K562 (cell line): ENCODE measurements at regions of chr3 and their contacts with region 1.

Region 1: GRCh38 chr3:12810013-12810780 is 13.7 kb downstream of the CAND2 start:
- DNase-seq: peak; percentile 98 to 100 (median 100)
- ATAC-seq: peak; percentile 99
- H3K4me3 ChIP-seq: peak overlapping the region; percentile 59
- H3K27ac ChIP-seq: peak overlapping the region; percentile 13; the same call in 2 of the 3 replicates
- H3K4me1 ChIP-seq: peaks cover 9 to 20% of the 10 kb centered on the region in 2 experiments; a peak in 4 of 5 replicates
- H3K27me3 ChIP-seq: no peaks in the 10 kb centered on the region
- CTCF ChIP-seq: peak; percentile 78 to 93 (median 93)
- EP300 ChIP-seq: no peak
- POLR2A ChIP-seq: peak; percentile 64; the same call in 1 of the 2 replicates
- RAD21 ChIP-seq: peak; percentile 61 to 70

Region 2: GRCh38 chr3:12796171-12797123 is 13.8 kb before region 1 on chr3 and contains the start of gene CAND2:
- CTCF ChIA-PET with region 1: no interaction called
- POLR2A ChIA-PET with region 1: interaction called, 65 read pairs
- in situ Hi-C with region 1: no loop called
- intact Hi-C with region 1: no loop called
- DNase-seq: peak; percentile 78 to 87 (median 84)
- ATAC-seq: peak; percentile 96
- H3K4me3 ChIP-seq: peak within 1 kb of the TSS; percentile 73
- H3K27ac ChIP-seq: peak within 1 kb of the TSS; percentile 77
- H3K4me1 ChIP-seq: peaks cover 8 to 25% of the 10 kb centered on the region in 2 experiments; a peak in 3 of 5 replicates
- H3K27me3 ChIP-seq: no peaks in the 10 kb centered on the region
- CTCF ChIP-seq: no peak
- EP300 ChIP-seq: no peak
- POLR2A ChIP-seq: peak; percentile 82
- RAD21 ChIP-seq: no peak
- polyA plus RNA-seq, gene CAND2: 0.91 to 1.4 TPM